ENCODE measurements at regions of chr4 and their contacts with region 1.

Region 1: GRCh38 chr4:76515975-76516843 is 81.2 kb downstream of the SHROOM3 start:
- DNase-seq: no peak
- ATAC-seq: no peak
- H3K4me3 ChIP-seq: no peak overlapping the region
- H3K27ac ChIP-seq: no peak overlapping the region
- H3K4me1 ChIP-seq: no peaks in the 10 kb centered on the region
- H3K27me3 ChIP-seq: no peaks in the 10 kb centered on the region
- CTCF ChIP-seq: no peak
- POLR2A ChIP-seq: no peak

Region 2: DNA sequence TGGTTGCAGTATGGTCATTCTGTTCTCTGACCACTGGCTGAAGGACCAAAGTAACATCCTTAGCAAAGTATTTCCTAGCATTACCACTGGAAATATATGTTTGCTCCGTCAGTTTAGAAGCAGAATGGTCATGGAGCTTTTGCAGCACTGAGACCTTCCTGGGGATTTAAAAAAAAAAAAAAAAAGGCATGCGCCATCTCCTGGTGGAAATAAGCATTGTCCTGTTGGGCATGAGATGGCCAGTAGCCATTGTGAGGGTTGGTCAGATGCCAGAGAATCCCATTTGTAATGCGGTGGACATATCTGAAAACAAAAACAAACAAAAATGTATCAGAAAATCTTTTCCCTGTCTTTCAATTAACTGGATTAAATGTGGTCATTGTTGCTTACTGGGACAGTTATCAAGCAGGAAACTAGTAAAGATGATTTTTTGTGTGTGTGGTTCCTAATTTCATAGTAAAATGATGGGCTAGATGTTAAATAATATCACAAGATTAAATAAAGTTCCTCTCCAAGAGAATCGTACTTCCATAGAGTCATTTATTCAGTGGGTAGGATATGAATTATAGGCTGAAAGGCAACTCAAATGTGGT is 242.2 kb after region 1 on chr4:
- in situ Hi-C with region 1: loop called in 3 of 4 experiments (anchors 10 kb)
- intact Hi-C with region 1: loop called (anchors 1 kb)
- DNase-seq: no peak
- ATAC-seq: peak in 1 of 2 donors; percentile 75
- H3K4me3 ChIP-seq: no peak overlapping the region
- H3K27ac ChIP-seq: no peak overlapping the region
- H3K4me1 ChIP-seq: no peaks in the 10 kb centered on the region
- H3K27me3 ChIP-seq: no peaks in the 10 kb centered on the region
- CTCF ChIP-seq: peak; percentile 49 to 73 (median 57)
- POLR2A ChIP-seq: no peak

Region 3: GRCh38 chr4:77044461-77045150 is 528.4 kb after region 1 on chr4:
- in situ Hi-C with region 1: loop called in 3 of 4 experiments (anchors 25 kb)
- intact Hi-C with region 1: loop called (anchors 5 kb)
- DNase-seq: no peak
- ATAC-seq: no peak
- H3K4me3 ChIP-seq: no peak overlapping the region
- H3K27ac ChIP-seq: peak overlapping the region in 1 of 4 donors; percentile 34
- H3K4me1 ChIP-seq: peaks cover 10 to 11% of the 10 kb centered on the region in 2 donors
- H3K27me3 ChIP-seq: no peaks in the 10 kb centered on the region
- CTCF ChIP-seq: peak; percentile 24 to 53 (median 43)
- POLR2A ChIP-seq: no peak